HCT116 (cell line): ENCODE measurements at regions of chr7 and their contacts with region 1.

Region 1: DNA sequence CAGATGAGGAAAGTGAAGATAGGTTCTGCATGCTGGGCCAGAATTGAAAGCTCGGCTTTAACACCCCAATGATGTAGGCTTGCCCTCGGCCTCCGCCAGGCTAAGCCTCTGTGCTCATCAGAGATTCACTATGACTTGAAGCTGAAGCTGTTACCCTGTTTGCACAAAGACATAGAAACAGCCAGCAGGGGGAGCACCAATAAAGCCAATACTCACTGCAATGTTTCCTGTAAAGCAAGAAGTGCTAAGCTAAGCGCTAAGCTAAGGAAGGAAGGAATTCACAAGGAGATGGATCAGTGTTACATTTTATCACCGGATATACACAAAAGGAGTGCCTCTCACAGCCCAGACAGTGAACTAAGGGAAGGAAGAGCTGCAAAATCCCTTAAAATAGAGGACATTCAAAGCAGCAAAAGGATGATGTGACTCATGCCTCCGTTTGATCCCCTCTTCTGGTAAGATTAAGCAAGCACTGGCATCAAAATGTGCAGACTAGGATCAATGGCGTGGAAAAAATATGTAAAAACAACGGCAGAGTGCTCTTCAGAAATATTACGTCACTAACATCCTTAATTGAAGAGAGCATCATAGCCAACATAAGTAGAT is 153.8 kb downstream of the COBL start:
- DNase-seq: peak; percentile 85
- ATAC-seq: peak; percentile 96
- H3K4me3 ChIP-seq: 0 out of 4 replicates have a peak overlapping the region, but pooled peaks of 1 of the 2 experiments have one; percentile 10
- H3K27ac ChIP-seq: no peak overlapping the region
- H3K4me1 ChIP-seq: peaks cover 0 to 9% of the 10 kb centered on the region in 2 experiments; a peak in 2 of 4 replicates
- H3K27me3 ChIP-seq: no peaks in the 10 kb centered on the region
- CTCF ChIP-seq: peak; percentile 83 to 93 (median 93)
- POLR2A ChIP-seq: no peak
- RAD21 ChIP-seq: peak; percentile 93

Region 2: GRCh38 chr7:50092579-50093491 is 1070.0 kb before region 1 on chr7 and contains the start of gene ZPBP:
- CTCF ChIA-PET with region 1: interaction called, 30 read pairs
- POLR2A ChIA-PET with region 1: no interaction called
- RAD21 ChIA-PET with region 1: interaction called in 1 of 2 experiments, 3 read pairs
- intact Hi-C with region 1: loop called (anchors 2 kb)
- DNase-seq: peak; percentile 7
- ATAC-seq: peak; percentile 42
- H3K4me3 ChIP-seq: no peak within 1 kb of the TSS
- H3K27ac ChIP-seq: no peak within 1 kb of the TSS
- H3K4me1 ChIP-seq: no peaks in the 10 kb centered on the region
- H3K27me3 ChIP-seq: no peaks in the 10 kb centered on the region
- CTCF ChIP-seq: peak; percentile 45 to 83 (median 62); a peak in 5 of 6 replicates
- POLR2A ChIP-seq: no peak
- RAD21 ChIP-seq: peak; percentile 80
- total RNA-seq, gene ZPBP: not detected

Region 3: GRCh38 chr7:50418086-50418515 is 744.7 kb before region 1 on chr7:
- CTCF ChIA-PET with region 1: interaction called, 7 read pairs
- POLR2A ChIA-PET with region 1: no interaction called
- RAD21 ChIA-PET with region 1: no interaction called
- intact Hi-C with region 1: loop called (anchors 2 kb)
- DNase-seq: peak; percentile 76
- ATAC-seq: peak; percentile 100
- H3K4me3 ChIP-seq: no peak overlapping the region
- H3K27ac ChIP-seq: no peak overlapping the region
- H3K4me1 ChIP-seq: no peaks in the 10 kb centered on the region
- H3K27me3 ChIP-seq: no peaks in the 10 kb centered on the region
- CTCF ChIP-seq: peak; percentile 90 to 98 (median 97)
- POLR2A ChIP-seq: no peak
- RAD21 ChIP-seq: peak; percentile 88

Region 4: GRCh38 chr7:50696810-50697582 is 465.8 kb before region 1 on chr7:
- CTCF ChIA-PET with region 1: interaction called, 7 read pairs
- POLR2A ChIA-PET with region 1: no interaction called
- RAD21 ChIA-PET with region 1: no interaction called
- intact Hi-C with region 1: loop called (anchors 5 kb)
- DNase-seq: peak; percentile 8
- ATAC-seq: peak; percentile 84
- H3K4me3 ChIP-seq: no peak overlapping the region
- H3K27ac ChIP-seq: no peak overlapping the region
- H3K4me1 ChIP-seq: no peaks in the 10 kb centered on the region
- H3K27me3 ChIP-seq: no peaks in the 10 kb centered on the region
- CTCF ChIP-seq: peak; percentile 38 to 72 (median 67); a peak in 5 of 6 replicates
- POLR2A ChIP-seq: no peak
- RAD21 ChIP-seq: peak; percentile 56

Region 5: DNA sequence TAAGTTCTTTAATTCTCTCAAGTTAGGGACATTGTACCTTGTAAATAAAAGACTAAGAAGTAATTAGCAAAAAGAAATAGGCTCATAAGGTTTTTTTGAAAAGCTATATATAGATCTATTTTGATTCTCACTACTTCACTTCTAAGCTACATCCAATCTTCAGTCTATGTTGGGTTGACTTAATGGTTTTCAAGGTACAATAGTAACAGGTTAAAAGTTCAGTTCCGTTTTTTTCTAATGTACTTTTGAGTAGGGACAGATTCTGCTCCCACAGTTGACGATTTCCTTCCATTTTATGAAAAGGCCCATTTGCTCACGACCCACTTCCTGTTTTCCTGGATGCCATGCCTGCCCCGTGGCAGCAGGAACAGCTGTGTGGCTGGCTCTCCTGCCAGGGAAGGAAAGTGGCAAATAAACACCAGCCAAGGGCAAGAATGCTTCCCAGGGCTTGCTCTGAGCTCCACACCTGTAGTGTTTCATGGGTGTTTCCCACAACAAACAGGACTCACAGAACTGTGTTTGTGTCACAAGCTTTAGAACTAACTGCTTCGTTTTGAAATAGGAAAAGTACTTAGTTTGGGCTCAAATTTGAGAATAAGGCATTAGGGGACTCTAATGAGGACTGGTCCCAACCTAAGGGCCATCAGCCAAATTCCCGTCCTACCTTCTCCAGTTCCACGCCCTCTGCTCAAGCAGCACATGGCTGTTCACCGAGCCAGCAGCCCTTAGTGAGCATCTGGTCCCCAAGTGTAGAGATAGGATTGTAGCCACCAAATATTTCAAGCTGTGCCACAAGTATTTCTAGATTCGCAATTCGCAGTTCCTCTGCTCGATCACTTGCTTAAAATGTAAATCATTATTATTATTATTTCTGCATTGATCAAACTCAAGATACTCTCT is 86.9 kb before region 1 on chr7:
- CTCF ChIA-PET with region 1: no interaction called
- POLR2A ChIA-PET with region 1: no interaction called
- RAD21 ChIA-PET with region 1: no interaction called
- intact Hi-C with region 1: no loop called
- DNase-seq: no peak
- ATAC-seq: no peak
- H3K4me3 ChIP-seq: no peak overlapping the region
- H3K27ac ChIP-seq: no peak overlapping the region
- H3K4me1 ChIP-seq: no peaks in the 10 kb centered on the region
- H3K27me3 ChIP-seq: no peaks in the 10 kb centered on the region
- CTCF ChIP-seq: no peak
- POLR2A ChIP-seq: no peak
- RAD21 ChIP-seq: no peak

Region 6: DNA sequence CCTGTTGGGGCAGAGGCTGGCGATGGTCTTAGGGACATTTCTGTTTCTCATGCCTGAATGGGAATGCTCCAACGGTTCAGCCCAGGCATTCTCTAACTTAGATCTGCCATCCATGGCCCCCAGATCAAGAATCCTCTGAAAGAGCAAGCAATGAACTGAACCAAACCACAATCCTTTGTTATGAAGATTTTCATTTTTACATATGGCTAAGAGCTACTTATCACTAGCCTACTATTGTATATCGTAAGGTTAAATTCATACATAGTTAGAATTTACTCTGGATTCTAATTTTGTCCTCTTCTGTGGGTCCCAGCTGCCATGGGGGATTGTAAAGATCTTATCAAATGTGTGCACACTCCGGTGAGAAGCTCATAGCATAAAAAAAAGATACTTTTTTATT is 10.0 kb before region 1 on chr7:
- CTCF ChIA-PET with region 1: interaction called, 14 read pairs
- POLR2A ChIA-PET with region 1: no interaction called
- RAD21 ChIA-PET with region 1: no interaction called
- intact Hi-C with region 1: no loop called
- DNase-seq: no peak
- ATAC-seq: no peak
- H3K4me3 ChIP-seq: no peak overlapping the region
- H3K27ac ChIP-seq: no peak overlapping the region
- H3K4me1 ChIP-seq: no peaks in the 10 kb centered on the region
- H3K27me3 ChIP-seq: no peaks in the 10 kb centered on the region
- CTCF ChIP-seq: no peak
- POLR2A ChIP-seq: no peak
- RAD21 ChIP-seq: no peak

Region 7: DNA sequence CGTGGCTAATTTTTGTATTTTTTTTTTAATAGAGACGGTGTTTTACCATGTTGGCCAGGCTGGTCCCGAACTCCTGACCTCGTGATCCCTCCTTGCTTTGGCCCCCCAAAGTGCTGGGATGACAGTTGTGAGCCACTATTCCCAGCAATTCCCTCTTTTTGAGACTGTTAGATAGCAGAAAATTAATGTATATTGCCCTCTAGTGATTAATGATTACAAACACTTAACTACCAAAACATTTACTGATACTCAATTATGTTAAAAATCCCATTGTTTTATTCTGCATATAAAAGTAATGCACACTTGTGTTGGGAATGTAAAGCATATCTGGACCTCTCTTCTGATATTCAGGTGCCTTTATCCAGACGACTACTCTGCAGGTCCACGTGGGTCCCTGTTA is 195.0 kb after region 1 on chr7:
- CTCF ChIA-PET with region 1: interaction called, 17 read pairs
- POLR2A ChIA-PET with region 1: no interaction called
- RAD21 ChIA-PET with region 1: interaction called, 6 to 7 read pairs
- intact Hi-C with region 1: loop called (anchors 2 kb)
- DNase-seq: no peak
- ATAC-seq: peak; percentile 25; the same call in 1 of the 2 replicates
- H3K4me3 ChIP-seq: no peak overlapping the region
- H3K27ac ChIP-seq: no peak overlapping the region
- H3K4me1 ChIP-seq: no peaks in the 10 kb centered on the region
- H3K27me3 ChIP-seq: no peaks in the 10 kb centered on the region
- CTCF ChIP-seq: peak in 2 of 3 experiments; percentile 26 to 59; a peak in 2 of 6 replicates
- POLR2A ChIP-seq: no peak
- RAD21 ChIP-seq: peak; percentile 70

Region 8: DNA sequence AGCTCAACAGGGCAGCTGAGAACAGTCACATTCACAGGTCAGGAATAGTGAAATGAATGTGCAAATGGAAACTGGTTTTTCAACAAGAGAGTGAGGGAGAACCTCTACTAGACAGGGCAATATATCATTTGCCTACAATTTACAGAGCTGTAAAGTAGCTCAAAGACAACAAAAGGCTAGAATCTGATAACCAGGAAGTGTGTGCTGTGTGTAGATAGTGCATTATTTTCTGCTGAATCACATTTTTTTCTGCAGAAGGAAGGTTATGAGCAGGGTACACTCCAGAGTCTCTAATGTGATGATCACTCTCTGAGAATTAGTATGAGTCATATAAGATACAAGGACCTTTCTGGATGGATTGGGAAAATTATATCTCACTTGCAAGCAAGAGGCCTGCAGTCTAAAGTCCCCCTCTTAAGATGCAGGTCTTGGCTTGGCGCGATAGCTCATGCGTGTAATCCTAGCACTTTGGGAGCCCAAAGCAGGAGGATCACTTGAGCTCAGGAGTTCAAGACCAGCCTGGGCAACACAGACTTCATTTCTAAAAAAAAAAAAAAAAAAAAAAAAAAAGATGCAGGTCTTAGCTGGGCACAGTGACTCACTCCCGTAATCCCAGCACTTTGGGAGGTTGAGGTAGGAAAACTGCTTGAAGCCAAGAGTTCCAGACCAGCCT is 213.7 kb after region 1 on chr7:
- CTCF ChIA-PET with region 1: interaction called, 136 read pairs
- POLR2A ChIA-PET with region 1: no interaction called
- RAD21 ChIA-PET with region 1: interaction called, 4 to 5 read pairs
- intact Hi-C with region 1: no loop called
- DNase-seq: peak; percentile 79
- ATAC-seq: peak; percentile 80
- H3K4me3 ChIP-seq: peak overlapping the region in 1 of 2 experiments; percentile 25; a peak in 2 of 4 replicates
- H3K27ac ChIP-seq: peak overlapping the region; percentile 80
- H3K4me1 ChIP-seq: peaks cover 29 to 48% of the 10 kb centered on the region in 2 experiments
- H3K27me3 ChIP-seq: no peaks in the 10 kb centered on the region
- CTCF ChIP-seq: no peak
- POLR2A ChIP-seq: no peak
- RAD21 ChIP-seq: 0 out of 2 replicates have a peak, but pooled peaks have one; percentile 10

Region 9: GRCh38 chr7:51878865-51879264 is 716.0 kb after region 1 on chr7:
- CTCF ChIA-PET with region 1: no interaction called
- POLR2A ChIA-PET with region 1: no interaction called
- RAD21 ChIA-PET with region 1: no interaction called
- intact Hi-C with region 1: no loop called
- DNase-seq: no peak
- ATAC-seq: no peak
- H3K4me3 ChIP-seq: no peak overlapping the region
- H3K27ac ChIP-seq: no peak overlapping the region
- H3K4me1 ChIP-seq: no peaks in the 10 kb centered on the region
- H3K27me3 ChIP-seq: no peaks in the 10 kb centered on the region
- CTCF ChIP-seq: no peak
- POLR2A ChIP-seq: no peak
- RAD21 ChIP-seq: no peak

Region 10: DNA sequence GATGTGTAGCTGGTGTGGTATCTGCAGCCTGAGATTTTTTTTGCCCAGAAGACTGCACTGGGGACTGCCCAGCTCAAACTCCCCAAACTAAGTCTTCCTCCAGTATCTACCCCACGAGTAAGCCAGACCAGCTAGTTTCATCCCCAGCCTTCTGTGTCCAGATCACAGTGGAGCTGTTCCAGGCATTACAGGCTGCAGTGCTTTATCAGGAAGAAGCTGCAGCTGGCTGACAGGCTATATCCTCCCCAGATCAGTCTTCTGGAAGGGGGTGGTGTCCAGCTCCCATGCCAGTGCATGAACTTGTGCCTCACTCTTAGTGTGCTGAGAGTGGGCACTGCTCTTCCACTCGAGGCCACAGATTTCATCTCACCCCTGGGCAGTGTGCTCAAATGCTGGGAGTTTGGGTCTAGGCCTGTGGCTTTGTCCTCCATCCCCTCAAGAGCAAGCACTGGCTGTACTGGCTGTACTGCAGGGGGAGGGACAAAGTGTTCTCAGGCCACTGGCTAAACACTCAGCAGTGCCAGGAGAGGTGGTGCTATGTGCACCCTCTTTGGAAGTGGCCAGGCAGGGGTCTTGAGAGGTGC is 832.9 kb after region 1 on chr7:
- CTCF ChIA-PET with region 1: no interaction called
- POLR2A ChIA-PET with region 1: no interaction called
- RAD21 ChIA-PET with region 1: no interaction called
- intact Hi-C with region 1: no loop called
- DNase-seq: no peak
- ATAC-seq: no peak
- H3K4me3 ChIP-seq: no peak overlapping the region
- H3K27ac ChIP-seq: no peak overlapping the region
- H3K4me1 ChIP-seq: no peaks in the 10 kb centered on the region
- H3K27me3 ChIP-seq: no peaks in the 10 kb centered on the region
- CTCF ChIP-seq: no peak
- POLR2A ChIP-seq: no peak
- RAD21 ChIP-seq: no peak